ENCODE measurements at regions of chr13 and their contacts with region 1.

Region 1: GRCh38 chr13:39616087-39616694 is 13.2 kb upstream of the LHFPL6 start:
- DNase-seq: peak; percentile 73
- H3K27ac ChIP-seq: no peak overlapping the region
- CTCF ChIP-seq: peak; percentile 90

Region 2: GRCh38 chr13:39144941-39145533 is 471.2 kb before region 1 on chr13:
- CTCF ChIA-PET with region 1: interaction called, 10 read pairs
- POLR2A ChIA-PET with region 1: no interaction called
- DNase-seq: peak; percentile 65
- H3K27ac ChIP-seq: no peak overlapping the region
- CTCF ChIP-seq: peak; percentile 77

Region 3: GRCh38 chr13:39273953-39274738 is 342.0 kb before region 1 on chr13:
- CTCF ChIA-PET with region 1: interaction called, 19 read pairs
- POLR2A ChIA-PET with region 1: no interaction called
- DNase-seq: peak; percentile 4
- H3K27ac ChIP-seq: no peak overlapping the region
- CTCF ChIP-seq: 0 out of 2 replicates have a peak, but pooled peaks have one; percentile 11

Region 4: GRCh38 chr13:39605677-39606320 is 10.4 kb before region 1 on chr13:
- CTCF ChIA-PET with region 1: interaction called, 11 read pairs
- POLR2A ChIA-PET with region 1: interaction called, 5 read pairs
- DNase-seq: no peak
- H3K27ac ChIP-seq: no peak overlapping the region
- CTCF ChIP-seq: no peak

Measured in RWPE1 (cell line).